ENCODE measurements at regions of chr20 and their contacts with region 1.

Region 1: DNA sequence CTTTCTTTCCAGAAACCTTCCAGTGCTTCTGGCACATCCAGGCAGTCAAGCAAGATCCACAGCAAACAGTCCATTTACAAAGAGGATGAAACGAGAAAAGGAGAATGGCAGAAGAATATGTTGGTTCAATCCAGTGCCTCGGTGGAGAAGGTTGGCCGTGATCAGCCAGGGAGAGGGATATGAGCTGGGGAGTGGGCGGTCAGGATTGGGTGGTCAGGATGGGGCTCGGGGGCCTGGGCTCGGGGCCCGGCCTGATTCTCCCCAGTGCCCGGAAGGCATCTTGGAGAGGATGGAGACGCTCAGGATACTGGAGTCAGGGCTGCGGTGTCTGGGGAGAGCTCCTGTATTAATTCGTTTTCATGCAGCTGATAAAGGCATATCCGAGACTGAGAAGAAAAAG is 61.3 kb downstream of the EFCAB8 start:
- DNase-seq: no peak
- H3K4me3 ChIP-seq: no peak overlapping the region
- H3K27ac ChIP-seq: no peak overlapping the region
- H3K4me1 ChIP-seq: no peaks in the 10 kb centered on the region
- H3K27me3 ChIP-seq: no peaks in the 10 kb centered on the region
- CTCF ChIP-seq: no peak

Region 2: DNA sequence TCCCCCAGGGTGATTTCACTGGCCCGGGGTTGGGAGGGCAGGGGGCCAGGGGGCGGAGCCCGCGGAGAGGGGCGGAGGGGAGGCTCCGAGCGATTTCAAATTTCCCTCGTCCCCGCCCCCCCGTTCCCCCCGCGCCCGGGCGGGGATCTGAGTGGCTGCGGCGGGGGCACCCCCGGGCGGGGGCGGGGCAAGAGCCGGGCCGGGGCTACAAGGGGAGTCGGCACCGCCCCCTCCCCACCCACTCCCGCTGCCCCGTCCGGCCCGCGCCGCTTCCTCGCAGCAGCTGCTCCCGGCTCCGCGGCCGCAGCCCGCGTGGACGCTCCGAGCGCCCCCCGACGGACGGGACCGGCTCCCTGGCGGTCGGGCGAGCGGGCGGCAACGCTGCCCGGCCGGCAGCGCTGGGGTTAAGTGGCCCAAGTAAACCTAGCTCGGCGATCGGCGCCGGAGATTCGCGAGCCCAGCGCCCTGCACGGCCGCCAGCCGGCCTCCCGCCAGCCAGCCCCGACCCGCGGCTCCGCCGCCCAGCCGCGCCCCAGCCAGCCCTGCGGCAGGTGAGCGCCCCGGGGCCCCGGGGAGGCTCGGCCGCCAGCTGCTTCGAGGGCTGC is 157.8 kb before region 1 on chr20 and contains the start of gene DNMT3B:
- CTCF ChIA-PET with region 1: no interaction called
- dilution Hi-C with region 1: no loop called
- in situ Hi-C with region 1: no loop called
- intact Hi-C with region 1: no loop called
- DNase-seq: peak; percentile 49
- H3K4me3 ChIP-seq: peak within 1 kb of the TSS; percentile 50 to 64 (median 61)
- H3K27ac ChIP-seq: no peak within 1 kb of the TSS
- H3K4me1 ChIP-seq: peaks cover 10% of the 10 kb centered on the region
- H3K27me3 ChIP-seq: peaks cover 3% of the 10 kb centered on the region
- CTCF ChIP-seq: peak in 1 of 2 donors; percentile 9
- total RNA-seq, gene DNMT3B: 1.2 to 2.0 TPM

Region 3: GRCh38 chr20:32982617-32983458 is 62.8 kb after region 1 on chr20:
- CTCF ChIA-PET with region 1: no interaction called
- dilution Hi-C with region 1: no loop called
- in situ Hi-C with region 1: no loop called
- intact Hi-C with region 1: no loop called
- DNase-seq: no peak
- H3K4me3 ChIP-seq: no peak overlapping the region
- H3K27ac ChIP-seq: no peak overlapping the region
- H3K4me1 ChIP-seq: no peaks in the 10 kb centered on the region
- H3K27me3 ChIP-seq: peaks cover 2% of the 10 kb centered on the region
- CTCF ChIP-seq: no peak

Region 4: GRCh38 chr20:33005132-33005566 is 85.1 kb after region 1 on chr20:
- CTCF ChIA-PET with region 1: no interaction called
- dilution Hi-C with region 1: loop called (anchors 5 kb)
- in situ Hi-C with region 1: no loop called
- intact Hi-C with region 1: loop called (anchors 5 kb)
- DNase-seq: no peak
- H3K4me3 ChIP-seq: no peak overlapping the region
- H3K27ac ChIP-seq: no peak overlapping the region
- H3K4me1 ChIP-seq: no peaks in the 10 kb centered on the region
- H3K27me3 ChIP-seq: no peaks in the 10 kb centered on the region
- CTCF ChIP-seq: peak; percentile 47 to 50